Sigmoid colon (tissue), 7 donors: ENCODE measurements at regions of chrX and their contacts with region 1.

Region 1: DNA sequence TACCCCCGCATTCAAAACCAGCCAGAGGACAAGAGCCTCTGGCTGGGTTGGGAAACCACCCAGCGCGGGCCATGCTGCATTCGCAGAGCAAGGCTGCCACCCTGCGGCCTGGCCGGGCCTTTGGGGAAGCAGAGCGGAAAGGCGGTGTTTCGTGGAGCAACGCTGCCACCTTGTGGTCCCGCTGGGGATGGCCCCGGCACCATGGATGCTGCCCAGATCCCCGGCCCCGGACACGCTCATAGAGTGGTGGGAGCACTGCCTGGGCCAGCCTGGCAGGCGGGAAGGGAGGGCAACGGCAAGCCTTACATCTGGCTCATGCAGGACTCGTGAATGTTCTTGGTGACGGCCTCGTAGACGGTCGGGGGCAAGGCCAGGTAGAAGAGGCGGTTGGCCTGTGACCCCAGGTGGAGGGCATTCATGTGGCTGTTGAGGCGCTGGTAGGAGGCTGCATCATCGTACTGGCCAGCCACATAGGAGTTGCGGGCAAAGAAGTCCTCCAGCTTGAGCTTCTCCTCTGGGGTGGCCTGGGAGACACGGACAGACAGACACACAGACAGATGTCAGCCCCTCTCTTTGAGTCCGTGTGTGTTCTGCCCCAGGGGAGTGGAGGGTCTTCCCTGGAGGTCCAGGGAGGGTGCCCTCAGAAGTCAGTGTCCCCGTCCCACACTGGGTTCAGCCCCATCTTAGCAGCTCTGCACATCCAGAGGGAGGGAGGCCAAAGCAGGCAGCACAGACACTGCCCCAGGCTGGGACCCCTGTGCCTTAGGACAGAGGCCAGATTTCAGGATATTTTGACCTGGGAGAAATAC is 11.6 kb downstream of the G6PD start:
- DNase-seq: peak; percentile 94
- H3K4me3 ChIP-seq: no peak overlapping the region
- H3K27ac ChIP-seq: peak overlapping the region; percentile 17 to 70 (median 62)
- H3K4me1 ChIP-seq: peaks cover 0 to 5% (median 4%) of the 10 kb centered on the region in 4 donors
- H3K27me3 ChIP-seq: no peaks in the 10 kb centered on the region
- CTCF ChIP-seq: peak; percentile 86 to 99 (median 95)
- EP300 ChIP-seq: no peak
- POLR2A ChIP-seq: no peak

Region 2: DNA sequence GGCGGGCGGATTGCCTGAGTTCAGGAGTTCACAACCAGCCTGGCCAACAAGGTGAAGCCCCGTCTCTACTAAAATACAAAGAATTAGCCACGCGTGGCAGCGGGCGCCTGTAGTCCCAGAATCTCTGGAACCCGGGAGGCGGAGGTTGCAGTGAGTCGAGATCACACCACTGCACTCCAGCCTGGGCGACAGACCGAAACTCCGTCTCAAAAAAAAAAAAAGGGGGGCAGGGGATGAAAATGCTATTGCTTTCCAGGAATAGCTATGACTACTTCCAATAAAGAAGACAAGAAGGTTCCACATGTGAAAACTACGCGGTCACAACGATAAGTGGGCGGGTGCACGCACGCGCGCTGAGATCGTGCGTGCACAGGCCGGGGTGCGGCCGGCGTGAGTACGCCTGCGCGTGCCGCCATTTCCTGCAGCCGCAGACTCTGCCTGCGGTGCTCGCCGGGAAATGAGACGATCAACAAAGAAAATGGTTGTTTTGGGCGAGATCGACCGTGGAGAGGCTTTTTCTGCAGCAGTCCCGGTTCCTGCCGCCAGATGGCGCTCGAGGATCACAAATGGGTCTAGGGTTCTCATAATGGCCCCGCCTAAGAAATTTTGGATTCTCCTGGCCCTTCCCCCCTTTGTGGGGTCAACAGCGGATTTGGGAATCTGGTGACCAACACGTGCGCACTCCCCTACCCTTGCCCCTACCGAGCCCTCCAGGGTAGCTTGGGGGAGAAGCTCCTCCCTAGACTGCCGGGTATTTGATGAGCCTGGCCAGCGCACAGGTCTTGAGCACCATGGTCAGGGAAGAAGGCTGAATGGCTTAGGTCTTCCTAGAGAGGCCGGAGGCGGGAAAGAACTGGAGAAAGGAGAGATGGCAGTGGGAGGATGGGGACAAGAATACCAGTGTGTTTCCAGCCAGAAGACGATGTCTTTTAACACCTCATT is 1576.3 kb before region 1 on chrX:
- intact Hi-C with region 1: loop called (anchors 2 kb)
- DNase-seq: peak; percentile 94
- H3K4me3 ChIP-seq: peak overlapping the region; percentile 7 to 42 (median 28)
- H3K27ac ChIP-seq: peak overlapping the region; percentile 64 to 77 (median 72)
- H3K4me1 ChIP-seq: no peaks in the 10 kb centered on the region
- H3K27me3 ChIP-seq: peaks cover 0 to 3% (median 0%) of the 10 kb centered on the region in 3 donors
- CTCF ChIP-seq: peak; percentile 65 to 92 (median 74)
- EP300 ChIP-seq: peak in 1 of 4 donors; percentile 25
- POLR2A ChIP-seq: no peak

Region 3: GRCh38 chrX:154397819-154398724 is 137.0 kb before region 1 on chrX and contains the start of gene RPL10:
- intact Hi-C with region 1: loop called (anchors 2 kb)
- DNase-seq: peak; percentile 98
- H3K4me3 ChIP-seq: peak within 1 kb of the TSS; percentile 59 to 80 (median 68)
- H3K27ac ChIP-seq: peak within 1 kb of the TSS; percentile 95 to 98 (median 97)
- H3K4me1 ChIP-seq: peaks cover 0 to 20% (median 13%) of the 10 kb centered on the region in 4 donors
- H3K27me3 ChIP-seq: no peaks in the 10 kb centered on the region
- CTCF ChIP-seq: no peak
- EP300 ChIP-seq: peak in 1 of 4 donors; percentile 78
- POLR2A ChIP-seq: peak; percentile 95
- total RNA-seq, gene RPL10: 3,138 to 8,651 (median 6,770) TPM